Activated CD4-positive, alpha-beta T cell treated with anti-CD3 and anti-CD28 coated beads, Interleukin-2, amount 10 ng/mL, durations not matched to agents 24 days and 14 days (primary cell): ENCODE measurements at regions of chr22 and their contacts with region 1.

Region 1: DNA sequence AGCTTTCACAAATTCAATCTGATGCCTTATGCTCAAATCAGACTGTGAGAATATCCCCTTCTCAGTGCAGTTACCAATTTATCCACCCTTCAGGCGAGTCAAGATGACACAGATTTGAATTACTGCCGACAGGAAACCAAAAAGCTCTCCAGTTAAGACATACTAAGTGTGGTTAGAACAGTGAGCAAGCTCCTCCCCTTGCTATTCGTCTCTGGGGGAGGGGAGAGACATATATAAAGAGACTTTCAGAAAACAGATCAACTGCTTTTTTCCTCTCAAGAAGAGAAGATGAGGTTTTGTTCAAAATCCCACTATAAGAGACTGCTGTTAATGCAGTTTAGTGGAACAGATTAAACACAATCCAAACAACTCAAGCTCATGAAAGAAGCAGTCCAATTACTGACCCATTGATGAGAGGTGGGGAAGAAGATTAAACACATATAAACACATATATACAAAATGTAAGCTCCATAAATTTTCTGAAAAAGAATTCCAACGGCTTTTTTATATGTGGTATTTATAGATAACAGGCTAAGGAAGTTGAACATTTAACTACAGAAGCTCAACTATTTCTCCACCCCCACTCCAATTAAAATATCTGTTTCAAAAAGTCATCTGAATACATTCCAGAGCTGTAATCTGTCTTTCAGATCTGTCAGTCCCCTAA is 102.7 kb downstream of the MRTFA start:
- DNase-seq: peak; percentile 89
- H3K4me3 Mint-ChIP-seq: peak overlapping the region; percentile 78
- H3K27ac Mint-ChIP-seq: peak overlapping the region; percentile 81
- H3K4me1 Mint-ChIP-seq: peaks cover 48% of the 10 kb centered on the region
- H3K27me3 Mint-ChIP-seq: no peaks in the 10 kb centered on the region

Region 2: DNA sequence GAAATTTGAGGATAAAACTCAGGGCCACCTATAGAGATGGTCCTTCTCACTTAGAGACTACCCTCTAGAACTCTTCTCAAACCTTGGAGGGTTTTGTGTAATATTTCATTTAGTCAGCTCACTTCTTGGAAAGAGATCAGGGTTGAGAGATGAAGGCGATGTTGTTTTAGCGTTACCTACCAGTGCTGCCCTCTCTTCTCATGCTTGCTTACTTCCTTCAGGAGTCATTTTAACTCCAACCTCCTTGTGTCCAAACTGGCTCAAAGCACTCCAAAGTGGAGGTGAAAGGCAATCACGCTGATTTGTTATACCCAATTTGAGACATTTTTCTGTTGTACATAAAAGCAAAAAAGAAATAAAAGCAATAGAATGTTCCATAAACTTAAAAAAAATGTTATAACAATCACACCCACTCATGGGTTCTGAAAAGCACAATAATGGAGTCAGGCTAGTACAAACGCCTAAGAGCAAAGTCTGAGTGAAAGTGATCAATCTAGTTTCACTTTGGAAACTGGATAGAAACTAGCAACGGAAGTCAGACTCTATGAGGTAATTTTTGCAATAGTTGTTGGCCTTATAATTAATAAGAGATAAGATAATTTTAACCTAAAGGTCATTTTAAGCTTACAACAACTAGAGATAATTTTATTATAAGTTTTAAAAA is 14.4 kb before region 1 on chr22:
- intact Hi-C with region 1: loop called (anchors 2 kb)
- DNase-seq: peak; percentile 70
- H3K4me3 Mint-ChIP-seq: peak overlapping the region; percentile 74
- H3K27ac Mint-ChIP-seq: peak overlapping the region; percentile 91
- H3K4me1 Mint-ChIP-seq: peaks cover 24% of the 10 kb centered on the region
- H3K27me3 Mint-ChIP-seq: no peaks in the 10 kb centered on the region

Region 3: GRCh38 chr22:40578171-40578570 is 44.3 kb after region 1 on chr22:
- intact Hi-C with region 1: loop called (anchors 2 kb)
- DNase-seq: peak; percentile 74
- H3K4me3 Mint-ChIP-seq: peak overlapping the region; percentile 19
- H3K27ac Mint-ChIP-seq: peak overlapping the region; percentile 88
- H3K4me1 Mint-ChIP-seq: peaks cover 18% of the 10 kb centered on the region
- H3K27me3 Mint-ChIP-seq: no peaks in the 10 kb centered on the region

Region 4: DNA sequence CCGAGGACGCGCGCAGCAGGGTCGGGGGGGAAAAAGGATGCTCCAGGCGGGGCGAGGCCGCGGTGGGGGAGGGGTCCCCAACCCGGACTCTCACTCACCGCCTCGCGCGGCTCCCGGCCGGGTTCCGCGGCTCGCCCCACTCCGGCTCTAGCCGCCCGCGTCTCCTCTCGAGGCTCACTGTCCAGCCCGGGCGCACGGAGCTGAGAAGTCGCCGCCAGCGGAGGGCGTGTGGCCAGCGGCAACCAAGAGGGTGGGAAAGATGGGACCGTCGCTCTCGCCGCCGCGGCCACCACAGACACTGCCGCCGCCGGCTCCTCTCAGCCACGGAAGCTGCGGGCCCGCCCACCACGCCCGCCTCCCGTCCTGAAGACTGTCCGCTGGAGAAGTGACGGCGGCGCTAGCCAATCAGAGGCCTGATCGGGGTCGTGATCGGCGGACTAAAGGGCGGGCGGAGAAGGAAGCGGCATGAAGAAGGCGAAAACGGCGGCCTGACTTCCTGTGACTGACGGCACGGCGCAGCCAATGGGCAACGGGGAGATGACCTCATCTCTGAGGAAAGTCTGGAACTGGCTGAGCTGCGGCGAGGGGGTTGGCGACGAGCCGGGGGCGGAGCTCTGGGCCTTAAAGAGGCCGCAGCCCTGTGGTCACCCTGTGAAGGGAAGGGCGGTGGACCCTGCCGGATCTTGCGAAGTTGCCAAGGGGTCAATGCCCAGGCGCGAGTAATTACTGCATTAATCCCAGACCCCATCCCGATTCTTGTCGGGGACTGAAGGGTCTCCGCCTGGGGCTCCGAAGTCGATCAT is 102.7 kb after region 1 on chr22 and contains the start of gene MRTFA:
- intact Hi-C with region 1: loop called (anchors 1 kb)
- DNase-seq: peak; percentile 100
- H3K4me3 Mint-ChIP-seq: peak within 1 kb of the TSS; percentile 91
- H3K27ac Mint-ChIP-seq: peak within 1 kb of the TSS; percentile 95
- H3K4me1 Mint-ChIP-seq: peaks cover 32% of the 10 kb centered on the region
- H3K27me3 Mint-ChIP-seq: no peaks in the 10 kb centered on the region
- total RNA-seq, gene MRTFA: 51.7 and 51.9 TPM in 2 replicates

Region 5: DNA sequence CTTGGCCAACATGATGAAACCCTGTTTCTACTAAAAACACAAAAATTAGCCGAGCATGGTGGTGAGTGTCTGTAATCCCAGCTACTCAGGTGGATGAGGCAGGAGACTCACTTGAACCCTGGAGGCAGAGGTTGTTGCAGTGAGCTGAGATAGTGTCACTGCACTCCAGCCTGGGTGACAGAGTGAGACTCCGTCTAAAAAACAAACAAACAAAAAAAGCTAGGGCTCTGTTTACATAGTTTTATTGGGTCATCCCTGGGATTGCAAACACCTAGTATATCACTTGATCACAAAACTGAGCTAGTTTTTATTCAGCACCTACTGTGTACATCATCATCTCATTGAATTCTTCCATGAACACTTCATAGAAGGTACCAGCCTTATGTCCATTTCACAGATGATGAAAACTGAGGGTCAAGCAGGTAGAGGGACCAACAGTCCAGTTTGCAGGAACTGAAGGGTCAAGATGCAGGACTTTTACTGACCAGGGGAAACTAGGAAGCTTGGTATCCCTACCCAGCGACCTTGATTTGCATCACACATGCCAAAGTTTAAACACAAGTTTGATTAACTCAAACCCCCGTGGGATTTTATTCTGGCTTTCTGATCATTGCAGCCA is 111.8 kb after region 1 on chr22:
- intact Hi-C with region 1: loop called (anchors 2 kb)
- DNase-seq: no peak
- H3K4me3 Mint-ChIP-seq: no peak overlapping the region
- H3K27ac Mint-ChIP-seq: no peak overlapping the region
- H3K4me1 Mint-ChIP-seq: peaks cover 14% of the 10 kb centered on the region
- H3K27me3 Mint-ChIP-seq: no peaks in the 10 kb centered on the region

Region 6: GRCh38 chr22:40898850-40899357 is 365.1 kb after region 1 on chr22:
- intact Hi-C with region 1: loop called (anchors 2 kb)
- DNase-seq: peak; percentile 77
- H3K4me3 Mint-ChIP-seq: peak overlapping the region; percentile 34
- H3K27ac Mint-ChIP-seq: peak overlapping the region; percentile 80
- H3K4me1 Mint-ChIP-seq: peaks cover 8% of the 10 kb centered on the region
- H3K27me3 Mint-ChIP-seq: no peaks in the 10 kb centered on the region